PC-9 (cell line): ENCODE measurements at regions of chr16 and their contacts with region 1.

Region 1: DNA sequence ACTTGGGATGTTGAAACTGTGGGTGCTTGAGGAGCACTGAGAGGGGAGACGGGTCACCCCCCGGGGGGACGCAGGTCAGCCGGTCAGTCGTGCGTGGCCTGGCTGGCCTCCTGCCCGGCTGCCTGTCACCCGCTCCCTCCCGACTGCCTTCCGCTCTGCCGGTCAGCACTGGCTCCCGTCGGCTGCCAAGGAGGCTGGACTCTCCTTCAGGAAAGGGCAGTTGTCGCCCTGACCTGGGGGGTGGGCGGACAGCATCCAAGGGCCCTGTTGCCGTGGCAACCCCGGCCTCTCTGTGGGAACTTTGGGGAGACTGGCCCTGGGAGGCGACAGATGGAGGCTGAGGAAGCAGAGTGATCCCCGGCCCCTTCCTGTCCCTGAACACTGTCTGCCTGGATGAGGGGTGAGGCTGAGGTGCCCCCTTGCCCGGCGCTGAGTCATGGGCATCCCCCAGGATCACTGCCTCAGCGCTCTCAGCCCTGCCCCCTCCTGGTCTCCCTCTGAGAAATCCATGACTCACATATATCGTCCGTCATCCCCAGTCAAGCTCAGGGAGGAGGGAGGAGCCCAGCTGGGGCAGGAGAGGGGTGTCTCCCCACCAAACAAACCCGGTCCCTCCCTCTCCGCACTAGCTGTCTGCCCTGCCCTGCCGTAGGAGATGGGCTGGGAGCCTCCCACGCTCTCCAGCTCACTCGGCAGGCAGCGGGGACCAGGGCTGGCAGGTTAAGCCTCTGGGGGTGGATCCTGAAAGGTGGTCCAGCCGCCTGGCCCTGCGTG is at the start of gene ADGRG1:
- DNase-seq: peak; percentile 86 to 89
- H3K4me3 ChIP-seq: peak within 1 kb of the TSS; percentile 44; the same call in 1 of the 2 replicates
- H3K27ac ChIP-seq: peak within 1 kb of the TSS; percentile 75
- H3K4me1 ChIP-seq: peaks cover 97% of the 10 kb centered on the region
- H3K27me3 ChIP-seq: no peaks in the 10 kb centered on the region
- CTCF ChIP-seq: peak; percentile 28; the same call in 1 of the 2 replicates
- total RNA-seq, gene ADGRG1: 105 and 131 TPM in 2 replicates

Region 2: GRCh38 chr16:57447186-57447962 is 180.8 kb before region 1 on chr16 and contains the starts of genes CIAPIN1 and COQ9:
- CTCF ChIA-PET with region 1: no interaction called
- POLR2A ChIA-PET with region 1: no interaction called
- intact Hi-C with region 1: no loop called
- DNase-seq: peak; percentile 86 to 88
- H3K4me3 ChIP-seq: peak within 1 kb of the TSS; percentile 87
- H3K27ac ChIP-seq: peak within 1 kb of the TSS; percentile 53
- H3K4me1 ChIP-seq: peaks cover 14% of the 10 kb centered on the region
- H3K27me3 ChIP-seq: no peaks in the 10 kb centered on the region
- CTCF ChIP-seq: no peak
- total RNA-seq, gene CIAPIN1: 51.4 and 56.4 TPM in 2 replicates
- total RNA-seq, gene COQ9: 53.5 and 58.3 TPM in 2 replicates

Region 3: DNA sequence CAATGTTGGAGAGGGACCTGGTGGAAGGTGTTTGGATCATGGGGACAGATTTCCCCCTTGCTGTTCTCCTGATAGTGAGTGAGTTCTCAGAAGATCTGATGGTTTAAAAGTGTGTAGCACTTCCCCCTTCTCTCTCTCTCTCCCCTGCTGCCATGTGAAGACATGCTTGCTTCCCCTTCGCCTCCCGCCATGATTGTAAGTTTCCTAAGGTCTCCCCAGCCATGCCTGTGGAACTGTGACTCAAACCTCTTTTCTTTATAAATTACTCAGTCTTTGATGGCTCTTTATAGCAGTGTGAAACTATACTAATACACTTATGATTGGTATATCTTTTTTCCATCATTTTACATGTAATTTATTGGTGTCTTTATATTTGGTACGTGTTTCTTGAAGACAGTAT is 72.4 kb before region 1 on chr16:
- CTCF ChIA-PET with region 1: no interaction called
- POLR2A ChIA-PET with region 1: no interaction called
- intact Hi-C with region 1: no loop called
- DNase-seq: no peak
- H3K4me3 ChIP-seq: no peak overlapping the region
- H3K27ac ChIP-seq: no peak overlapping the region
- H3K4me1 ChIP-seq: no peaks in the 10 kb centered on the region
- H3K27me3 ChIP-seq: peaks cover 7% of the 10 kb centered on the region; the same call in 1 of the 2 replicates
- CTCF ChIP-seq: no peak

Region 4: GRCh38 chr16:57600048-57600835 is 28.0 kb before region 1 on chr16:
- CTCF ChIA-PET with region 1: interaction called, 4 read pairs
- POLR2A ChIA-PET with region 1: interaction called, 7 read pairs
- intact Hi-C with region 1: loop called (anchors 2 kb)
- DNase-seq: peak in 1 of 2 experiments; percentile 74
- H3K4me3 ChIP-seq: no peak overlapping the region
- H3K27ac ChIP-seq: no peak overlapping the region
- H3K4me1 ChIP-seq: peaks cover 13% of the 10 kb centered on the region
- H3K27me3 ChIP-seq: no peaks in the 10 kb centered on the region
- CTCF ChIP-seq: peak; percentile 89

Region 5: DNA sequence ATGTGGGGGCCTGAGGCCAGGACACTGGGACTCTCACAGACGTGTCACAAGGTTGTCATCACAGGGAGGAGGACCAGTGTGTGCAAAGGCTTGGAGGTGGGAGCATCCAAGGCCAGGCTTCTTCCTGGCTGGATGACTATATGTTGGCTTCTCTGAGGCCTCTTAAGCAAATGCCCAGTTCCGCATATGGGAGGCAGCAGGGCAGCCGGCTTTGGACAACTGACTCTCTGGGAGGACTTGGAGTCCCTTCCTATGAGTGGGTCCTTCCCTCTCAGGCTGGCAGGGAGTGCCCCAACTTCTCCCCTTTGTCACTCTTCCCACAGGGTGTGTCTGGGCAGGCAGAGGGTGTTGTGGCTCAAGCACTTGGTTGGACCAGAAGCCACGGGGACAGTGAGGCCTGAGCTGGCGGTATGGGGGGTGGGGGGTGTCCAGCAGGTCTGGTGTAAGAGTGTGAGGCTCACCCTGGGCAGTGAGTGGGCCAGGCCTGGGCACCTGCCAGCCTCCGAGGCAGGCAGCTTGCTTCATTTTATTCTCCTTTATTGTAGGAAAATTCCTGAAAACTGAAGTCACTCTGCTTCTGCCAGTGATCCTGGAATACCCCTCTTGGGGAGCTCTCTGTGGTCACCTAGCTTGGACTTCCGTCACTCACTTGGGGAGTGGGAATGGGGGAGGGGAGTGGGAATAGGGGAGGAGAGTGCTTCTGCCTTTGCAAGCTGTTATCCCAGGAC is 15.1 kb after region 1 on chr16:
- CTCF ChIA-PET with region 1: interaction called, 11 read pairs
- POLR2A ChIA-PET with region 1: interaction called, 13 read pairs
- intact Hi-C with region 1: loop called (anchors 1 kb)
- DNase-seq: peak; percentile 84 to 87
- H3K4me3 ChIP-seq: no peak overlapping the region
- H3K27ac ChIP-seq: peak overlapping the region; percentile 70
- H3K4me1 ChIP-seq: peaks cover 77% of the 10 kb centered on the region
- H3K27me3 ChIP-seq: no peaks in the 10 kb centered on the region
- CTCF ChIP-seq: no peak

Region 6: GRCh38 chr16:57711346-57712026 is 83.3 kb after region 1 on chr16:
- CTCF ChIA-PET with region 1: no interaction called
- POLR2A ChIA-PET with region 1: no interaction called
- intact Hi-C with region 1: no loop called
- DNase-seq: no peak
- H3K4me3 ChIP-seq: no peak overlapping the region
- H3K27ac ChIP-seq: no peak overlapping the region
- H3K4me1 ChIP-seq: no peaks in the 10 kb centered on the region
- H3K27me3 ChIP-seq: peaks cover 10% of the 10 kb centered on the region; the same call in 1 of the 2 replicates
- CTCF ChIP-seq: no peak

Region 7: GRCh38 chr16:57741660-57742191 is 113.5 kb after region 1 on chr16:
- CTCF ChIA-PET with region 1: no interaction called
- POLR2A ChIA-PET with region 1: interaction called, 12 read pairs
- intact Hi-C with region 1: no loop called
- DNase-seq: no peak
- H3K4me3 ChIP-seq: no peak overlapping the region
- H3K27ac ChIP-seq: no peak overlapping the region
- H3K4me1 ChIP-seq: peaks cover 8% of the 10 kb centered on the region
- H3K27me3 ChIP-seq: no peaks in the 10 kb centered on the region
- CTCF ChIP-seq: no peak

Region 8: GRCh38 chr16:57816334-57816745 is 188.1 kb after region 1 on chr16:
- CTCF ChIA-PET with region 1: no interaction called
- POLR2A ChIA-PET with region 1: no interaction called
- intact Hi-C with region 1: loop called (anchors 5 kb)
- DNase-seq: peak; percentile 90 to 98
- H3K4me3 ChIP-seq: no peak overlapping the region
- H3K27ac ChIP-seq: peak overlapping the region; percentile 85
- H3K4me1 ChIP-seq: peaks cover 72% of the 10 kb centered on the region
- H3K27me3 ChIP-seq: no peaks in the 10 kb centered on the region
- CTCF ChIP-seq: no peak